ENCODE measurements at regions of chr19 and their contacts with region 1.

Region 1: DNA sequence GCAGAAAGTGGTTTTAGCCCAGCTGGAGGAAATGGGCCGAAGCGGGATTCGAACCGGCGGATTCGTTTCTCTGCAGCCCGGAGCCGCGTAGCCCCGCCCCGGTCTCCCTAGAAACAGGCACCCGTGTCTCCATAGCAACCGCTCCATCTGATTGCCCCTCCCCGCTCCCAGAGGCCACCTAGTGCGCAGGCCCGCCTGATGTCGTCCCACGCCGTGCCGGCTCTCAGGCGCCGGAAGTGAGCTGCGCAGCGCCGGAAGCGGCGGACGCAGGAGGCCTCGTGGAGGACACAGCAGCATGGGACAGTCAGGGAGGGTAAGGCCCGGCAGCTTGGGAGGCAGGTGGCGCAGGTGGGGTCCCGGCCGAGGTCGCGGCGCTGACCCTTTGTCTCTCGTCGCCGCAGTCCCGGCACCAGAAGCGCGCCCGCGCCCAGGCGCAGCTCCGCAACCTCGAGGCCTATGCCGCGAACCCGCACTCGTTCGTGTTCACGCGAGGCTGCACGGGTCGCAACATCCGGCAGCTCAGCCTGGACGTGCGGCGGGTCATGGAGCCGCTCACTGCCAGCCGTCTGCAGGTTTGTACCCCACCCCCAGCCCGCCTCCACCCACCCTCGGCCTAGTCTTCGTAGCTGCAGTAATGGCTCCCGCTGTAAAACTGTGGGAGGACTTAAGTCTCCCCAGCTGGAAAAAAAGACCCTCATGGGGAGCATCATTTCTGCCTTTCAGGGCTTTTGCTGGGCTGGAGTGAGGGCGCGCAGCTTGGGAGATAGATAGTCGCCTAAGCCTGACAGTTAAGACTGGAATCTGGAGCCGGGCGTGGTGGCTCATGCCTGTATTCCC is at the start of gene PPAN:
- DNase-seq: peak; percentile 99
- ATAC-seq: peak; percentile 58
- H3K4me3 Mint-ChIP-seq: peak within 1 kb of the TSS; percentile 90
- H3K27ac Mint-ChIP-seq: peak within 1 kb of the TSS; percentile 99
- H3K4me1 Mint-ChIP-seq: peaks cover 67% of the 10 kb centered on the region
- H3K27me3 Mint-ChIP-seq: no peaks in the 10 kb centered on the region
- total RNA-seq, gene PPAN: 139 to 149 TPM

Region 2: GRCh38 chr19:9834726-9835506 is 271.4 kb before region 1 on chr19 and contains the start of gene PIN1:
- CTCF ChIA-PET with region 1: no interaction called
- POLR2A ChIA-PET with region 1: no interaction called
- intact Hi-C with region 1: loop called in 1 of 2 experiments (anchors 2 kb)
- DNase-seq: peak; percentile 100
- ATAC-seq: peak; percentile 99
- H3K4me3 Mint-ChIP-seq: peak within 1 kb of the TSS; percentile 86
- H3K27ac Mint-ChIP-seq: peak within 1 kb of the TSS; percentile 88
- H3K4me1 Mint-ChIP-seq: peaks cover 20% of the 10 kb centered on the region
- H3K27me3 Mint-ChIP-seq: no peaks in the 10 kb centered on the region
- total RNA-seq, gene PIN1: 70.4 to 74.2 TPM

Region 3: DNA sequence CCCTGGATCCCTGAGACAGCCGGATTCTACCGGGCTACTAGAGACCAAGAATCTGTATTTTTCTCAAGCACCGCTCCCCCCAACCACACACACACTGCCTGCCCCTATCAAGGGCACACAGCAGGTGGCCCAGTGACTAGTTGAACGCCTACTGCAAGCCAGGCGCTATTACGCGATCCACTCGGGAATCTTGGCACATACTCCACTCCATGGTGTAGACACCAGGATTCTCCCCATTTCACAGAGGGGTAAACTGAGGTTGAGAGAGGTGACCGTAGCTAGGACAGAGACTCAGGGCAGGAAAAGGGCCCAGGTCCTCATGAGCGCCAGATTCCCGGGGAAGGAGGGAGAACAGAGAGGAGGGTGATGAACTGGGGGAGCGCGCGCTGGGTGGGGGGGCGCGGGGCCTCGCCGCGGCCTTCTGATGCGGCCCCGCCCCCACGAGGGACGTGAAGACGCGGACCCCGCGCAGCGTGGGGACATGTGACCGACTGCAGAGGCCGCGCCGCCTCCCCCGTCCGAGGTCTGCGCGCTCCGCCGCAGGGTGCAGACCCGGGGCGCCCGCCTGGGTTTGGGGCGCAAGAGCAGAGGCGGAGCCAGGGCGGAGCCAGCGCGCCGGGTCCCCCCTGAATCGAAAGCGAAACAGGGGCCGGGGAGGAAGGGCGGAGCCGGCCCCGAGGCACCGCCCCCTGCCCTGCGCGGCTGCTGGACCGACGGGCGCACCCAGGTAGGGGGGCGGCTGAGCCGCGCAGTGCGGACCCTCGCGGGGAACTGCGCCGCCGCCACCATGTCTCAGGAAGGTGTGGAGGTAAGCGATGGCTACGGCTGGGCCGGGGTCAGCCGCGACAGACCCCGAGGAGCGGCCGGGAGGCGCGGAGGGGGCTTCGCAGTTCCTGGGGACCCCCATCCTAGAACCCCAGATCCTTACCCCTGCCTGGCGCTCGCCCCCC is 20.4 kb before region 1 on chr19 and contains the start of gene SHFL:
- CTCF ChIA-PET with region 1: interaction called, 3 read pairs
- POLR2A ChIA-PET with region 1: no interaction called
- intact Hi-C with region 1: loop called in 1 of 2 experiments (anchors 1 kb)
- DNase-seq: peak; percentile 92
- ATAC-seq: peak; percentile 96
- H3K4me3 Mint-ChIP-seq: peak within 1 kb of the TSS; percentile 78
- H3K27ac Mint-ChIP-seq: peak within 1 kb of the TSS; percentile 74
- H3K4me1 Mint-ChIP-seq: peaks cover 11% of the 10 kb centered on the region
- H3K27me3 Mint-ChIP-seq: no peaks in the 10 kb centered on the region
- total RNA-seq, gene SHFL: 49.8 to 62.6 TPM

Region 4: GRCh38 chr19:10120538-10121189 is 14.3 kb after region 1 on chr19:
- CTCF ChIA-PET with region 1: interaction called, 8 read pairs
- POLR2A ChIA-PET with region 1: interaction called, 5 read pairs
- intact Hi-C with region 1: loop called (anchors 1 to 2 kb)
- DNase-seq: no peak
- ATAC-seq: no peak
- H3K4me3 Mint-ChIP-seq: no peak overlapping the region
- H3K27ac Mint-ChIP-seq: no peak overlapping the region
- H3K4me1 Mint-ChIP-seq: peaks cover 15% of the 10 kb centered on the region
- H3K27me3 Mint-ChIP-seq: no peaks in the 10 kb centered on the region

Region 5: GRCh38 chr19:10251792-10252694 is 145.7 kb after region 1 on chr19 and contains the start of gene MRPL4:
- CTCF ChIA-PET with region 1: no interaction called
- POLR2A ChIA-PET with region 1: interaction called, 4 read pairs
- intact Hi-C with region 1: loop called (anchors 2 to 5 kb)
- DNase-seq: peak; percentile 97
- ATAC-seq: peak; percentile 99
- H3K4me3 Mint-ChIP-seq: peak within 1 kb of the TSS; percentile 97
- H3K27ac Mint-ChIP-seq: peak within 1 kb of the TSS; percentile 97
- H3K4me1 Mint-ChIP-seq: peaks cover 18% of the 10 kb centered on the region
- H3K27me3 Mint-ChIP-seq: no peaks in the 10 kb centered on the region
- total RNA-seq, gene MRPL4: 130 to 140 TPM

Region 6: GRCh38 chr19:10408511-10409283 is 302.4 kb after region 1 on chr19:
- CTCF ChIA-PET with region 1: no interaction called
- POLR2A ChIA-PET with region 1: interaction called, 4 read pairs
- intact Hi-C with region 1: loop called in 1 of 2 experiments (anchors 2 kb)
- DNase-seq: peak; percentile 84
- ATAC-seq: peak; percentile 73
- H3K4me3 Mint-ChIP-seq: peak overlapping the region; percentile 26
- H3K27ac Mint-ChIP-seq: peak overlapping the region; percentile 73
- H3K4me1 Mint-ChIP-seq: peaks cover 69% of the 10 kb centered on the region
- H3K27me3 Mint-ChIP-seq: no peaks in the 10 kb centered on the region

Region 7: DNA sequence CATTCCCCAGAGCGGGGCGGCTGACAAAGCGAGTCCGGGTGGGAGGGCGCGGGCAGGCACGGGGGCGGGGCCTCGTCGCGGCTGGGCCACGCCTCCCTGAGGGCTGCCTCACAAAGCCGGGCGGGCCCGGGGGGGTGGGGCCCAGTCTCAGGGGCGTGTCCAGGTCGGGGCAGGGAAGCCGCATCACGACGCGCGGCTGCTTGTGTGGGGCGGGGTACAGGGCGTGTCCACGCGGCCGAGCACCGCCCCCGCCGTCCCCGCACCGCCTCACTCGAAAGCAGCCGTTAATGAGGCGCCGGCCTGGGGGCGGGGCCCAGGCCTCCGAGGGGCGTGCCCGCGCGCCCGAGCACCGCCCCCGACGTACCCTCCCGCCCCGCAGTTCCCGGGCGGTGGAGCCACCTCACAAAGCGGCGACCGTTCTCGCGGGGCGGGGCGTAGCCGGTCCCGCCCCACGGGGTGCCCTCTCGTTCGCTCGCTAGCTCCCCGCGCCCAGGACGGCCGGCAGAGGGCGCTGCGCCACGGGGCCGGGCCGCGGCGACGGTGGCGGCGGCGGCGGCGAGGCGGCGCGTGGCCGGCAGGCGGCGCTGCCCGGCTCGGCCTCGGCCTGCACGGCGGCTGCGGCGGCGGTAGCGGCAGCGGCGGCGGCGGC is 764.8 kb after region 1 on chr19 and contains the start of gene CARM1:
- CTCF ChIA-PET with region 1: no interaction called
- POLR2A ChIA-PET with region 1: no interaction called
- intact Hi-C with region 1: loop called in 1 of 2 experiments (anchors 10 kb)
- DNase-seq: peak; percentile 100
- ATAC-seq: peak; percentile 88
- H3K4me3 Mint-ChIP-seq: peak within 1 kb of the TSS; percentile 80
- H3K27ac Mint-ChIP-seq: peak within 1 kb of the TSS; percentile 97
- H3K4me1 Mint-ChIP-seq: peaks cover 28% of the 10 kb centered on the region
- H3K27me3 Mint-ChIP-seq: no peaks in the 10 kb centered on the region
- total RNA-seq, gene CARM1: 82.3 to 96.8 TPM

Measured in activated CD4-positive, alpha-beta T cell treated with anti-CD3 and anti-CD28 coated beads for 36 hours (primary cell).